ENCODE measurements at regions of chr20 and their contacts with region 1.

Region 1: DNA sequence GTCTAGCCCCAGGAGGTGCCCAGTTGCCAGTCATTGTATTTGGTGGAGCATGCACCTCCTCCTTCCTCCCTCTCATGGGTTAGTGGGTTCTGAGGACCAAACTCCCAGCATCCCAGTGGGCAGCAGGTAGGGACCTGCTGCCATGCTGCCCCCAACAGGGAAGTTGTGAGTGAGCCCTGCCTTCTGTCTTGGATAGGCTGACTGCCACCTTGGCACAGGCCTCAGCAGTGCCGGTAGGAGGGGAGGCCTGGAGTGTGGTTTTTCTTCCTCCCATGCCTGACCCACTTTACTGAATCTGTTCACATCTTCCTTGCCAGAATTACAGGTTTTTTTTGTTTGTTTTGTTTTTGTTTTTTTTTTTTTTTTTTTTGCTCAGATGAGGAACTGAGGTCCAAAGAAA is 24.5 kb downstream of the PLCG1 start:
- DNase-seq: no peak
- ATAC-seq: no peak
- H3K4me3 Mint-ChIP-seq: peak overlapping the region; percentile 25
- H3K27ac Mint-ChIP-seq: peak overlapping the region; percentile 84
- H3K4me1 Mint-ChIP-seq: peaks cover 86% of the 10 kb centered on the region
- H3K27me3 Mint-ChIP-seq: no peaks in the 10 kb centered on the region
- CTCF ChIP-seq: no peak

Region 2: DNA sequence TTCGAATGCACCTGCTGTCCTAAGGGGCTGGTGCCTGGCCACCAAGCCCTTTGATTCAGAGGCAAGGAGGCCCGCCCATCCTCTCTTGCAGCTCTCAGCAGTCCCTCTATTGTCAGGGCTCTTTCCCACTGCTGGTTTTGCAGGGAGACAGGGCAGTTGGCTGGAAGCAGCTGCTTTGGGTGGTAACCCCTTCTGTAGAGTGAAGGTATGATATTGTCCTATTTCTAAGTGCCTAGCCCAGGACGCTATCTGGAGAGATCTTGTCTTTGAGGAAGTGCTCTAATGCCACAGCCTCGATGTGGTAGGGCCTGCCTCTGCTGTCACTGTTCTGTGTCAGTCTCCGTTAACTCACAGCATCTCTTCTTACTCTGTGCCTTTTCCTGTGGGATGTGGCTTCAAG is 19.0 kb before region 1 on chr20:
- CTCF ChIA-PET with region 1: interaction called, 209 read pairs
- POLR2A ChIA-PET with region 1: interaction called, 361 read pairs
- intact Hi-C with region 1: loop called (anchors 2 kb)
- DNase-seq: peak; percentile 64
- ATAC-seq: peak; percentile 19
- H3K4me3 Mint-ChIP-seq: peak overlapping the region; percentile 91
- H3K27ac Mint-ChIP-seq: peak overlapping the region; percentile 91
- H3K4me1 Mint-ChIP-seq: peaks cover 87% of the 10 kb centered on the region
- H3K27me3 Mint-ChIP-seq: no peaks in the 10 kb centered on the region
- CTCF ChIP-seq: no peak

Measured in activated CD8-positive, alpha-beta T cell treated with anti-CD3 and anti-CD28 coated beads for 36 hours (primary cell).